Endothelial cell of umbilical vein (primary cell): ENCODE measurements at regions of chr9 and their contacts with region 1.

Region 1: GRCh38 chr9:69672596-69673310 is 582 bp upstream of the APBA1 start:
- DNase-seq: peak; percentile 83
- H3K4me3 ChIP-seq: peak overlapping the region; percentile 49 to 69 (median 64)
- H3K27ac ChIP-seq: peak overlapping the region; percentile 30
- H3K4me1 ChIP-seq: peaks cover 36% of the 10 kb centered on the region
- H3K27me3 ChIP-seq: peaks cover 17% of the 10 kb centered on the region in 2 experiments
- CTCF ChIP-seq: peak; percentile 91 to 94
- POLR2A ChIP-seq: no peak

Region 2: DNA sequence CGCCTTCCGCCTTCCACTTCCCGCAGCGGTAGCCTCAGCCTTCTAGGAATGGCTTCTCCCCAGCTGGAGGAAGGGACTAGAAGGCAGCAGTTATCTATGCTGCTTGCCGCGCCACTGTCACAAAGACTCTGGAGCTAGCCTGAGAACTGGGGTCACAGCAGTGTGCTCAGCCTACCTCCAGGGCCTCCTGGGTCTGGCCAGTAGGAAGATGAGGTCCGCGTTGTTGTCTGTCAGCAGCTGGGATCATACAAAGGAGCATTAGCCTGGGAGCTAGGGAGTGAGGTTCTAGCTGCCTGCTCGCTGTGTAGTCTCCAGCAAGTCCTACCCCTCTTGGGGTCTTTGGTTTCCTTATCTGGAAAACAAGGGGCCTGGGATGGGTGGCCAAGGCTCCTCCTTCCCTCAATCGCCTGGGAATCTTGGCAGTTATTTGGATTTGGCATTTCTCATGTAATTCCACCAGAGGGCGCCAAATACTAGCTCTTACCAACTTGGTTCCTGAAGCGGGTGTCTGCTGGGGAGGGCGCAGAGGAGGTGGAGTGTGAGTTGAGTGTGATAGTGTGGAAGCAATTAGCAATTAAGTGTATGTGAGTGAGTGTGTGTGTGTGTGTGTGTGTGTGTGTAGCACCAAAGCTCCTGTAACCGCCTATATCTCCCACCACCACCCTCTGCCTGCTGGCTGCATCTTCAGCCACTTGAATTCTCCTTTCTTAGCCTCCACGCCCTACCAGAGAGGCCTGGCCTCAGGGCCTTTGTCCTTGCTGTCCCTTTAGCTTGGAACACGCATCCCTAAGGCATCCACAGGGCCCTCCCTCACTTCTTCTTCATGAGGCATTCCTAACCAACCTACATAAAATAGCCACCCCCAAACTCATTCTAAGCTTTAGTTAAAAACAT is 250.6 kb before region 1 on chr9:
- CTCF ChIA-PET with region 1: interaction called, 43 read pairs
- POLR2A ChIA-PET with region 1: no interaction called
- dilution Hi-C with region 1: no loop called
- intact Hi-C with region 1: loop called (anchors 2 kb)
- DNase-seq: peak; percentile 66
- H3K4me3 ChIP-seq: no peak overlapping the region
- H3K27ac ChIP-seq: no peak overlapping the region
- H3K4me1 ChIP-seq: no peaks in the 10 kb centered on the region
- H3K27me3 ChIP-seq: peaks cover 2% of the 10 kb centered on the region in 2 experiments
- CTCF ChIP-seq: peak; percentile 58 to 66
- POLR2A ChIP-seq: no peak

Region 3: GRCh38 chr9:69573651-69574050 is 99.1 kb before region 1 on chr9:
- CTCF ChIA-PET with region 1: interaction called, 15 read pairs
- POLR2A ChIA-PET with region 1: no interaction called
- dilution Hi-C with region 1: no loop called
- intact Hi-C with region 1: loop called (anchors 2 kb)
- DNase-seq: peak; percentile 85
- H3K4me3 ChIP-seq: no peak overlapping the region
- H3K27ac ChIP-seq: peak overlapping the region; percentile 82
- H3K4me1 ChIP-seq: peaks cover 43% of the 10 kb centered on the region
- H3K27me3 ChIP-seq: no peaks in the 10 kb centered on the region
- CTCF ChIP-seq: no peak
- POLR2A ChIP-seq: no peak

Region 4: GRCh38 chr9:69660304-69660703 is 12.4 kb before region 1 on chr9:
- CTCF ChIA-PET with region 1: interaction called, 16 read pairs
- POLR2A ChIA-PET with region 1: no interaction called
- dilution Hi-C with region 1: no loop called
- intact Hi-C with region 1: no loop called
- DNase-seq: no peak
- H3K4me3 ChIP-seq: no peak overlapping the region
- H3K27ac ChIP-seq: no peak overlapping the region
- H3K4me1 ChIP-seq: peaks cover 15% of the 10 kb centered on the region
- H3K27me3 ChIP-seq: peaks cover 3 to 8% of the 10 kb centered on the region in 2 experiments
- CTCF ChIP-seq: no peak
- POLR2A ChIP-seq: no peak

Region 5: GRCh38 chr9:69785757-69786156 is 113.0 kb after region 1 on chr9:
- CTCF ChIA-PET with region 1: interaction called, 13 read pairs
- POLR2A ChIA-PET with region 1: no interaction called
- dilution Hi-C with region 1: no loop called
- intact Hi-C with region 1: no loop called
- DNase-seq: peak; percentile 11
- H3K4me3 ChIP-seq: no peak overlapping the region
- H3K27ac ChIP-seq: no peak overlapping the region
- H3K4me1 ChIP-seq: no peaks in the 10 kb centered on the region
- H3K27me3 ChIP-seq: peaks cover 5 to 34% of the 10 kb centered on the region in 2 experiments
- CTCF ChIP-seq: no peak
- POLR2A ChIP-seq: no peak

Region 6: GRCh38 chr9:69898714-69899209 is 226.0 kb after region 1 on chr9:
- CTCF ChIA-PET with region 1: interaction called, 9 read pairs
- POLR2A ChIA-PET with region 1: no interaction called
- dilution Hi-C with region 1: no loop called
- intact Hi-C with region 1: loop called (anchors 1 kb)
- DNase-seq: peak; percentile 95
- H3K4me3 ChIP-seq: peak overlapping the region in 1 of 3 experiments; percentile 12
- H3K27ac ChIP-seq: peak overlapping the region; percentile 94
- H3K4me1 ChIP-seq: peaks cover 32% of the 10 kb centered on the region
- H3K27me3 ChIP-seq: no peaks in the 10 kb centered on the region
- CTCF ChIP-seq: no peak
- POLR2A ChIP-seq: peak; percentile 75

Region 7: GRCh38 chr9:70111042-70111602 is 438.4 kb after region 1 on chr9:
- CTCF ChIA-PET with region 1: interaction called, 8 read pairs
- POLR2A ChIA-PET with region 1: no interaction called
- dilution Hi-C with region 1: no loop called
- intact Hi-C with region 1: loop called (anchors 5 kb)
- DNase-seq: peak; percentile 73
- H3K4me3 ChIP-seq: no peak overlapping the region
- H3K27ac ChIP-seq: no peak overlapping the region
- H3K4me1 ChIP-seq: peaks cover 19% of the 10 kb centered on the region
- H3K27me3 ChIP-seq: peaks cover 3 to 4% of the 10 kb centered on the region in 2 experiments
- CTCF ChIP-seq: peak; percentile 88 to 94
- POLR2A ChIP-seq: no peak